T-cell (primary cell): ENCODE measurements at regions of chr2 and their contacts with region 1.

Region 1: DNA sequence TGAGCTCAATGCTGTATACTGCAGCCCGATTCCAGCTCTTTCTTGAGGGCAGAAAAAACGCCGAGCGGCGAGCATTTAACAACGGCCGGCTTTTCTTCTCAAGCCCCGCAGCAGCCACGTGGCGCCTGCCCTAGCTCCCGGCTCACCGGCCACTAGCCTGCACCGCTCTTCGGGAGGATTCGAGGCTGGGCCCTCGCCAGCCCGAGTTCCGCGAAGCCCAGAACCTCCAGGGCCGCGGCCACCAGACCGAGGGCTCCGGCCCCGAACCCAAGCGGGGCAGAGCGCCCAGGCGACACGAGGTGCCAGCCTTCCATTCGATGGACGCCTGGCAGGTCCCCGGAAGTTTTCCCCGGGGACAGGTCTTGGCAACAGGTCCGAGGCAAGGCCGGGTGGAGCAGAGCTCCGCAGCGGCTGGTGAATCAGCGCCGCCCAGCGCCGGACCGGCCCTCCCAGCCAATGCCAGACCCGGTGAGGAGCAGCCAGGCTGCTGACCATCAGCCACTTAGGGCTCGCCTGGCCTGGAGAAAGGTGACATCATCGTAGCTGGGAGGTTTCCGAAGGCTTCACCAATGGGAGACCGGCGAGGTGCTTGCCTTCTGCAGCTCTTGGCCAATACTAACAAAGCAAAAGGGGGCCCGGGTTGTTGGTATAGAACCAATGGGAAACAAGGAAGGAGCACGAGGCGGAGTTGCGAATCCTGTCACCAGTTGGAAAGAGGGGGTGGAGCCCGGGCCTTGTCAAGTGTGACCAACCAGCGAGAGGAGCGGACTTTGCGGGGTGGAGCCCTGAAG is 544 bp upstream of the MXD1 start:
- DNase-seq: peak in 28 of 35 experiments; percentile 12 to 100 (median 100)
- ATAC-seq: peak; percentile 90 to 95 (median 92)
- H3K4me3 ChIP-seq: peak overlapping the region; percentile 92 to 94
- H3K4me3 Mint-ChIP-seq: peak overlapping the region; percentile 80 to 86 (median 81)
- H3K27ac ChIP-seq: peak overlapping the region; percentile 98
- H3K27ac Mint-ChIP-seq: peak overlapping the region; percentile 78
- H3K4me1 ChIP-seq: peaks cover 12 to 15% of the 10 kb centered on the region in 2 experiments
- H3K4me1 Mint-ChIP-seq: peaks cover 30 to 36% (median 36%) of the 10 kb centered on the region in 3 donors
- H3K27me3 ChIP-seq: no peaks in the 10 kb centered on the region
- H3K27me3 Mint-ChIP-seq: no peaks in the 10 kb centered on the region

Region 2: GRCh38 chr2:70029814-70030409 is 115.5 kb after region 1 on chr2:
- CTCF ChIA-PET with region 1: no interaction called
- POLR2A ChIA-PET with region 1: no interaction called
- DNase-seq: peak in 1 of 35 experiments; percentile 12
- ATAC-seq: no peak
- H3K4me3 ChIP-seq: no peak overlapping the region
- H3K4me3 Mint-ChIP-seq: no peak overlapping the region
- H3K27ac ChIP-seq: no peak overlapping the region
- H3K27ac Mint-ChIP-seq: no peak overlapping the region
- H3K4me1 ChIP-seq: no peaks in the 10 kb centered on the region
- H3K4me1 Mint-ChIP-seq: peaks cover 1 to 6% (median 2%) of the 10 kb centered on the region in 3 donors
- H3K27me3 ChIP-seq: no peaks in the 10 kb centered on the region
- H3K27me3 Mint-ChIP-seq: no peaks in the 10 kb centered on the region

Region 3: GRCh38 chr2:70086278-70086837 is 172.0 kb after region 1 on chr2:
- CTCF ChIA-PET with region 1: interaction called, 7 to 11 read pairs
- POLR2A ChIA-PET with region 1: interaction called, 6 to 18 read pairs
- DNase-seq: peak in 32 of 35 experiments; percentile 58 to 90 (median 74)
- ATAC-seq: peak; percentile 46 to 68 (median 50)
- H3K4me3 ChIP-seq: peak overlapping the region; percentile 52 to 97
- H3K4me3 Mint-ChIP-seq: peak overlapping the region; percentile 95 to 97 (median 95)
- H3K27ac ChIP-seq: peak overlapping the region; percentile 100
- H3K27ac Mint-ChIP-seq: peak overlapping the region; percentile 100
- H3K4me1 ChIP-seq: peaks cover 45 to 66% of the 10 kb centered on the region in 2 experiments
- H3K4me1 Mint-ChIP-seq: peaks cover 50 to 69% (median 61%) of the 10 kb centered on the region in 3 donors
- H3K27me3 ChIP-seq: no peaks in the 10 kb centered on the region
- H3K27me3 Mint-ChIP-seq: no peaks in the 10 kb centered on the region

Region 4: GRCh38 chr2:70173520-70173919 is 259.2 kb after region 1 on chr2:
- CTCF ChIA-PET with region 1: interaction called in 1 of 2 experiments, 11 read pairs
- POLR2A ChIA-PET with region 1: no interaction called
- DNase-seq: no peak
- ATAC-seq: no peak
- H3K4me3 ChIP-seq: no peak overlapping the region
- H3K4me3 Mint-ChIP-seq: no peak overlapping the region
- H3K27ac ChIP-seq: no peak overlapping the region
- H3K27ac Mint-ChIP-seq: no peak overlapping the region
- H3K4me1 ChIP-seq: no peaks in the 10 kb centered on the region
- H3K4me1 Mint-ChIP-seq: no peaks in the 10 kb centered on the region
- H3K27me3 ChIP-seq: no peaks in the 10 kb centered on the region
- H3K27me3 Mint-ChIP-seq: no peaks in the 10 kb centered on the region

Region 5: DNA sequence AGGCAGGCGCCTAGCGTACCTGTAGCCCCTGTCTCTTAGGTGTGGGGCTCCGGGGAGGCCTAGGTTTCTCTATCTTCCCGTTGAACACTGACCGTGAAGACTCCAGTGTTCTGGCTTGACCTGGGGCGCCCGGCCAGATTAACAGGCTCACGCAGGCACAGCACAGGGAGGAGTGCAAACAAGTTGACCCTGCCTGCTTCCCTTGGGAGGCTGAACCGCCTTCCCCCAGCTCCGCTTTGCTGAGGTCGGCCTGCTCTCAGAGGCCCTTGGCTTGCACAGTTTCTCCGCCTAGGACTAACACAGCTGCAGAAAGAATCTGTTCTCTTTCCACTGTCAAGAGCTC is 344.1 kb after region 1 on chr2:
- CTCF ChIA-PET with region 1: interaction called in 1 of 2 experiments, 14 read pairs
- POLR2A ChIA-PET with region 1: interaction called in 1 of 2 experiments, 3 read pairs
- DNase-seq: peak in 2 of 35 experiments; percentile 3 to 5
- ATAC-seq: peak in 2 of 4 experiments; percentile 15 to 26
- H3K4me3 ChIP-seq: peak overlapping the region; percentile 41 to 72
- H3K4me3 Mint-ChIP-seq: peak overlapping the region; percentile 85 to 91 (median 86)
- H3K27ac ChIP-seq: no peak overlapping the region
- H3K27ac Mint-ChIP-seq: peak overlapping the region; percentile 85 to 86
- H3K4me1 ChIP-seq: peaks cover 5 to 20% of the 10 kb centered on the region in 2 experiments
- H3K4me1 Mint-ChIP-seq: peaks cover 39 to 44% (median 43%) of the 10 kb centered on the region in 3 donors
- H3K27me3 ChIP-seq: no peaks in the 10 kb centered on the region
- H3K27me3 Mint-ChIP-seq: no peaks in the 10 kb centered on the region